Ascending aorta (tissue), 2 donors: ENCODE measurements at regions of chr14 and their contacts with region 1.

Region 1: GRCh38 chr14:52068615-52069303 is at the start of gene NID2:
- DNase-seq: peak in 1 of 2 donors; percentile 90
- H3K4me3 ChIP-seq: peak within 1 kb of the TSS; percentile 60 to 83
- H3K27ac ChIP-seq: peak within 1 kb of the TSS; percentile 77 to 88
- H3K4me1 ChIP-seq: peaks cover 2 to 3% of the 10 kb centered on the region in 2 donors
- H3K27me3 ChIP-seq: no peaks in the 10 kb centered on the region
- CTCF ChIP-seq: peak in 1 of 3 experiments; percentile 9
- total RNA-seq, gene NID2: 12.2 TPM

Region 2: DNA sequence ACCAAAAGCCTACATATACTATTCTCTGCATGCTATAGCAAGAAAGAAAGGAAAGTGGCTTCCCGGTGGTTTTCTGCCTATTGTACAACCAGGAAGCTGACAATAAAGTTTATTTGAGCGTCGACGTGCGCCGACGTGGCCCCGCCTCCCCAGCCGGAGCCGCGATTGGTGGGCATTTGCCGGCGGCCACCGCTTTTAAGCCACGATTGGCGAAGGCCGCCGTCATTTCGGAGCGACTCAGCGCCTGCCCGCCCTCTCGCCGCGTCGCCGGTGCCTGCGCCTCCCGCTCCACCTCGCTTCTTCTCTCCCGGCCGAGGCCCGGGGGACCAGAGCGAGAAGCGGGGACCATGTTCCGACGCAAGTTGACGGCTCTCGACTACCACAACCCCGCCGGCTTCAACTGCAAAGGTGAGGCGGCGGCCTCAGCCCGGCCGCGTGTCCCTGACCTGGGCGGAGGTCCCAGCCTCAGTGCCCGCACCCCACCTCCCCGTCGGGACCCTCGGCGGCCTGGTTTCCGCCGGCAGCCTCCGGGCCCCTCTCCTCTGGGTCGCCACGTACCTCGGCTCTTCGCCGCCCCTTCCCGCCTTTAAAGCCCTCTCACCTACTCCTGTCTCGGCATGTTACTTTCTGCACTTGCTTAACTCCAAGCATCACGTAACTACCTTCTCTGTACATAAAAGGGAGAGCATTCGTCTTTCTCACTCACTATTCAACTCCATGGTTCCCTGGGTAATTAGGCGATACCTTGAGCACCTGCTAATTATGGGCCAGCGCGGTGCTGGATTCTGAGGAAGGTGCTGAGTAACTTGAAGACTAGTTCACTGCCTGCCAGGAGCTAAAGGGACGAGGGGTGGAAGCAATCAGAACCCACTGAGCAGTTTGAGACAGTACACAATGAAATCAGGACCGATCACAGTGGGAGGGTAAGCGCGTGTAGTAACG is 79.2 kb before region 1 on chr14 and contains the start of gene RTRAF:
- intact Hi-C with region 1: loop called (anchors 2 kb)
- DNase-seq: peak; percentile 59 to 96
- H3K4me3 ChIP-seq: peak within 1 kb of the TSS; percentile 89 to 94
- H3K27ac ChIP-seq: peak within 1 kb of the TSS; percentile 86 to 94
- H3K4me1 ChIP-seq: peaks cover 0 to 3% of the 10 kb centered on the region in 2 donors
- H3K27me3 ChIP-seq: no peaks in the 10 kb centered on the region
- CTCF ChIP-seq: no peak
- total RNA-seq, gene RTRAF: 15.3 TPM

Region 3: GRCh38 chr14:52031781-52032180 is 37.0 kb before region 1 on chr14:
- intact Hi-C with region 1: loop called (anchors 5 kb)
- DNase-seq: peak; percentile 53 to 90
- H3K4me3 ChIP-seq: peak overlapping the region in 1 of 2 donors; percentile 3
- H3K27ac ChIP-seq: peak overlapping the region; percentile 41 to 68
- H3K4me1 ChIP-seq: peaks cover 0 to 11% of the 10 kb centered on the region in 2 donors
- H3K27me3 ChIP-seq: no peaks in the 10 kb centered on the region
- CTCF ChIP-seq: no peak

Region 4: GRCh38 chr14:52043690-52044089 is 25.1 kb before region 1 on chr14:
- intact Hi-C with region 1: loop called (anchors 2 kb)
- DNase-seq: no peak
- H3K4me3 ChIP-seq: no peak overlapping the region
- H3K27ac ChIP-seq: no peak overlapping the region
- H3K4me1 ChIP-seq: peaks cover 2 to 40% of the 10 kb centered on the region in 2 donors
- H3K27me3 ChIP-seq: no peaks in the 10 kb centered on the region
- CTCF ChIP-seq: peak; percentile 9 to 41 (median 20)

Region 5: GRCh38 chr14:52175982-52176502 is 107.3 kb after region 1 on chr14:
- intact Hi-C with region 1: no loop called
- DNase-seq: no peak
- H3K4me3 ChIP-seq: no peak overlapping the region
- H3K27ac ChIP-seq: no peak overlapping the region
- H3K4me1 ChIP-seq: no peaks in the 10 kb centered on the region
- H3K27me3 ChIP-seq: no peaks in the 10 kb centered on the region
- CTCF ChIP-seq: no peak